Activated CD4-positive, alpha-beta T cell treated with anti-CD3 and anti-CD28 coated beads, Interleukin-2, amount 10 ng/mL, durations not matched to agents 24 days and 14 days (primary cell): ENCODE measurements at regions of chr4 and their contacts with region 1.

Region 1: GRCh38 chr4:38958453-38959190 is 73.6 kb downstream of the TMEM156 start:
- DNase-seq: no peak
- H3K4me3 Mint-ChIP-seq: peak overlapping the region; percentile 56
- H3K27ac Mint-ChIP-seq: peak overlapping the region; percentile 97
- H3K4me1 Mint-ChIP-seq: peaks cover 41% of the 10 kb centered on the region
- H3K27me3 Mint-ChIP-seq: no peaks in the 10 kb centered on the region

Region 2: GRCh38 chr4:37503261-37503660 is 1455.4 kb before region 1 on chr4:
- intact Hi-C with region 1: no loop called
- DNase-seq: no peak
- H3K4me3 Mint-ChIP-seq: no peak overlapping the region
- H3K27ac Mint-ChIP-seq: no peak overlapping the region
- H3K4me1 Mint-ChIP-seq: no peaks in the 10 kb centered on the region
- H3K27me3 Mint-ChIP-seq: peaks cover 5% of the 10 kb centered on the region

Region 3: DNA sequence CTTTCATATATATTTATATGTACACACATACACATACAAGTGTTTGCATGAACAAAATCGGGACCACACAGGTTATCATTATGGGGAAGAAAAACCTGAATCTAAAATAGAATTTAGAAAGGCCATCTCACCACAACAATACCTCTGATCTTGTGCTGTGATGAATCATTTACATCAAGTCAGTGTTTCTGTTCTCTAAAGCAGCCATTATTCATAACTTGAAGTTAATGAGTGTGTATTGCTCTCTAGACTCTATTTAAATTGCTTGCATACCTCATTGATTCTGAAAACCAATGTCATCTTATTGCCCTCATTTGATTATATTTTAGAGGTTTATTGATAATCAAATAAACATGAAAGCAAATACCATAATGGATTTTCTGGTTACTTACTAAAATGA is 19.5 kb before region 1 on chr4:
- intact Hi-C with region 1: loop called (anchors 2 kb)
- DNase-seq: no peak
- H3K4me3 Mint-ChIP-seq: no peak overlapping the region
- H3K27ac Mint-ChIP-seq: peak overlapping the region; percentile 51
- H3K4me1 Mint-ChIP-seq: peaks cover 36% of the 10 kb centered on the region
- H3K27me3 Mint-ChIP-seq: no peaks in the 10 kb centered on the region

Region 4: GRCh38 chr4:38948551-38948950 is 10.1 kb before region 1 on chr4:
- intact Hi-C with region 1: loop called (anchors 1 kb)
- DNase-seq: no peak
- H3K4me3 Mint-ChIP-seq: no peak overlapping the region
- H3K27ac Mint-ChIP-seq: no peak overlapping the region
- H3K4me1 Mint-ChIP-seq: peaks cover 42% of the 10 kb centered on the region
- H3K27me3 Mint-ChIP-seq: no peaks in the 10 kb centered on the region

Region 5: GRCh38 chr4:38980903-38981676 is 22.5 kb after region 1 on chr4:
- intact Hi-C with region 1: loop called (anchors 1 kb)
- DNase-seq: peak; percentile 73
- H3K4me3 Mint-ChIP-seq: peak overlapping the region; percentile 69
- H3K27ac Mint-ChIP-seq: peak overlapping the region; percentile 87
- H3K4me1 Mint-ChIP-seq: peaks cover 55% of the 10 kb centered on the region
- H3K27me3 Mint-ChIP-seq: no peaks in the 10 kb centered on the region

Region 6: GRCh38 chr4:39037941-39038340 is 79.3 kb after region 1 on chr4:
- intact Hi-C with region 1: no loop called
- DNase-seq: no peak
- H3K4me3 Mint-ChIP-seq: no peak overlapping the region
- H3K27ac Mint-ChIP-seq: no peak overlapping the region
- H3K4me1 Mint-ChIP-seq: peaks cover 29% of the 10 kb centered on the region
- H3K27me3 Mint-ChIP-seq: no peaks in the 10 kb centered on the region